Activated CD4-positive, alpha-beta memory T cell treated with anti-CD3 and anti-CD28 coated beads for 36 hours (primary cell): ENCODE measurements at regions of chr20 and their contacts with region 1.

Region 1: GRCh38 chr20:10447027-10447426 is 11.9 kb downstream of the SLX4IP start:
- DNase-seq: peak; percentile 71
- H3K4me3 Mint-ChIP-seq: peak overlapping the region; percentile 65
- H3K27ac Mint-ChIP-seq: peak overlapping the region; percentile 65
- H3K4me1 Mint-ChIP-seq: peaks cover 20% of the 10 kb centered on the region
- H3K27me3 Mint-ChIP-seq: no peaks in the 10 kb centered on the region

Region 2: GRCh38 chr20:10427060-10427692 is 19.9 kb before region 1 on chr20:
- CTCF ChIA-PET with region 1: interaction called, 6 read pairs
- POLR2A ChIA-PET with region 1: no interaction called
- intact Hi-C with region 1: loop called (anchors 1 kb)
- DNase-seq: peak; percentile 50
- H3K4me3 Mint-ChIP-seq: no peak overlapping the region
- H3K27ac Mint-ChIP-seq: no peak overlapping the region
- H3K4me1 Mint-ChIP-seq: peaks cover 34% of the 10 kb centered on the region
- H3K27me3 Mint-ChIP-seq: no peaks in the 10 kb centered on the region

Region 3: GRCh38 chr20:10476319-10476724 is 29.3 kb after region 1 on chr20:
- CTCF ChIA-PET with region 1: no interaction called
- POLR2A ChIA-PET with region 1: no interaction called
- intact Hi-C with region 1: loop called (anchors 1 kb)
- DNase-seq: peak; percentile 20
- H3K4me3 Mint-ChIP-seq: no peak overlapping the region
- H3K27ac Mint-ChIP-seq: no peak overlapping the region
- H3K4me1 Mint-ChIP-seq: peaks cover 18% of the 10 kb centered on the region
- H3K27me3 Mint-ChIP-seq: no peaks in the 10 kb centered on the region

Region 4: DNA sequence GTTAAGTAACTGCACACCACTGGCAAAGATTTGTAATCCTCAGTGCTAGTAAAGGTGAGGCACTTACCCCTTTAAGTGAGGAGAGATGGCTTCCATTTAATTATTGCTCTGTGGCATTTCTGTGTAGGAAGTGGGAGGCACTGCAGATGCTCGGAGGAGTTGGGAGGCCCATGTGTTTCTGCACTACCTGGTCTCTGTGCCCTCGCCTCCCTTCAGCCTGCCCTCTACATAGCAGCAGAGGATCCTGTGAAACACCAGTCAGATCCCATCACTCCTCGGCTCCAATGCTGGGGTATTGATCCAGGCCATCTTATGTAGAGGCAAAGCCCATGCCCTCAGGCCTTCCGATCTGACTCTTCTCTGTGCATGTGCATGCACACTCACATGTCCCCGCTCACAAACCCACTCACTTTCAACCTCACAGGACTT is 55.1 kb after region 1 on chr20:
- CTCF ChIA-PET with region 1: no interaction called
- POLR2A ChIA-PET with region 1: no interaction called
- intact Hi-C with region 1: loop called (anchors 2 kb)
- DNase-seq: peak; percentile 38
- H3K4me3 Mint-ChIP-seq: peak overlapping the region; percentile 72
- H3K27ac Mint-ChIP-seq: peak overlapping the region; percentile 18
- H3K4me1 Mint-ChIP-seq: peaks cover 23% of the 10 kb centered on the region
- H3K27me3 Mint-ChIP-seq: no peaks in the 10 kb centered on the region

Region 5: GRCh38 chr20:10596726-10597125 is 149.7 kb after region 1 on chr20:
- CTCF ChIA-PET with region 1: no interaction called
- POLR2A ChIA-PET with region 1: no interaction called
- intact Hi-C with region 1: loop called (anchors 5 kb)
- DNase-seq: no peak
- H3K4me3 Mint-ChIP-seq: no peak overlapping the region
- H3K27ac Mint-ChIP-seq: no peak overlapping the region
- H3K4me1 Mint-ChIP-seq: peaks cover 12% of the 10 kb centered on the region
- H3K27me3 Mint-ChIP-seq: no peaks in the 10 kb centered on the region